ENCODE measurements at regions of chr1 and their contacts with region 1.

Region 1: DNA sequence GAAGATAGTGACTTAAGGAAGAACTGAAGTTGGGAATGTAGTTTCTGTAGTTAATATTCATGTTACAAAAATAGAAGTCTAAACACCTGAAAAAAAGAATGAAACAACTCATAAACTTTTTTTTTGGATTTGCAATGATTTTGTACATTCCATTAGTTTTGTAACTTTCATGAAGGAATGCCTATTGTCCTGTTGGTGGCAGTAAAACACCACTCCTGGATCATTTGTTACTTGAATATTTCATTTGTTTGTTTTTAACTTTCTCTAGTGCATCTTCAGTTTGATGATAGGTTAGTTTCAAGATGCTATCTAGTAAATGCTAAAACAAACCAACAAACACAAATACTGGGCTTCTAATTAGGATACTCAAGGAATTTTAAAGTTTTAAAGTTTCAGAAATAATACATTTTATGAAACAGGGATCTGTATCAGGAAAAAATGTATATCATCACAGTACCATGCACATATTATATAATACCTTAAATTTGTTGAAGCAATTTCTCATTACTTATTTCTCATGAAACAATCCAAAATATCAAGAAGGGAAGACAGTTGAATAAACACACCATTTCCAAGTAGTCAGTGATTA is 229.7 kb upstream of the CACYBP start:
- DNase-seq: no peak
- H3K4me3 Mint-ChIP-seq: no peak overlapping the region
- H3K27ac Mint-ChIP-seq: no peak overlapping the region
- H3K4me1 Mint-ChIP-seq: peaks cover 13% of the 10 kb centered on the region
- H3K27me3 Mint-ChIP-seq: no peaks in the 10 kb centered on the region

Region 2: GRCh38 chr1:174902531-174903099 is 132.6 kb after region 1 on chr1:
- intact Hi-C with region 1: no loop called
- DNase-seq: no peak
- H3K4me3 Mint-ChIP-seq: no peak overlapping the region
- H3K27ac Mint-ChIP-seq: no peak overlapping the region
- H3K4me1 Mint-ChIP-seq: no peaks in the 10 kb centered on the region
- H3K27me3 Mint-ChIP-seq: no peaks in the 10 kb centered on the region

Region 3: GRCh38 chr1:174990382-174990999 is 220.4 kb after region 1 on chr1:
- intact Hi-C with region 1: loop called (anchors 2 kb)
- DNase-seq: no peak
- H3K4me3 Mint-ChIP-seq: peak overlapping the region; percentile 85
- H3K27ac Mint-ChIP-seq: peak overlapping the region; percentile 84
- H3K4me1 Mint-ChIP-seq: peaks cover 25% of the 10 kb centered on the region
- H3K27me3 Mint-ChIP-seq: no peaks in the 10 kb centered on the region